HAP-1 (cell line): ENCODE measurements at regions of chr11 and their contacts with region 1.

Region 1: GRCh38 chr11:75706260-75706729 is 11.3 kb upstream of the MOGAT2 start:
- DNase-seq: peak; percentile 72 to 85
- H3K4me3 ChIP-seq: no peak overlapping the region
- H3K4me1 ChIP-seq: no peaks in the 10 kb centered on the region
- H3K27me3 ChIP-seq: no peaks in the 10 kb centered on the region

Region 2: DNA sequence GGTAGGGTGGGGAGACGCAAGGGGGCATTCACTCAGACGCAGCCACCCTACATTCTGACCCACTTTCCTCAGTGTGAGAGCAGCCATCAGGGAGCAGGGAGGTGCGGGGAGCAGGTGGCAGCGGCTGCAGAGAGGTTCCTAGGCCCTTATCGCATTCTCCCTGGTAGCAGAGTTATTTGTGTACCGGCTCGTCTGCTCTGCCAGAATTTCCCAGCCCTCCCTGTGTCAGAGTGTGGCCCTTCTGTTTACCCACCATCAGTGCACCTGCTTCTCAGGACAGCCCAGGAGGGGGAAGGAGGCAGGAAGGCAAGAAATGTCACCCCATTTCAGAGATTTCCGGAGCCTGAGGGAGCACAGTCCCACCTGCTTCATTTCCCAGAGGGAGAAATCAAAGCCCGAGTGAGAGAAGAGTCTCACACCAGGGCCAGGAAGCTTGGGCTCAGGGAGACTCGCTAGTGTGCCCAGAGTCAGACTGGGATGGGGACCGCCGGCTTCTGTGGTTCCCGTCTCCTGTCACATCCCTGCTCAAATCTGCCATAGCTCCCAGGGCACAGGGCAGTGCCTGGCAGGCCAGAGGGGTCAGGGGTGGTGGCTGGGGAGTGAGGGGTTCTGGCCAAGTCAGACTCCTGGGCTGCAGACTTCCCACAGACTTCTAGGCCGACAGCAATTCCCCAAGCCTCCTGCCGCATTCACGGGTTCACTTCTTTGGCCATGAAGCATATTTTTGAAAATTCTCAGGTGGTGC is 404.5 kb before region 1 on chr11:
- in situ Hi-C with region 1: no loop called
- DNase-seq: no peak
- H3K4me3 ChIP-seq: no peak overlapping the region
- H3K4me1 ChIP-seq: no peaks in the 10 kb centered on the region
- H3K27me3 ChIP-seq: no peaks in the 10 kb centered on the region

Region 3: DNA sequence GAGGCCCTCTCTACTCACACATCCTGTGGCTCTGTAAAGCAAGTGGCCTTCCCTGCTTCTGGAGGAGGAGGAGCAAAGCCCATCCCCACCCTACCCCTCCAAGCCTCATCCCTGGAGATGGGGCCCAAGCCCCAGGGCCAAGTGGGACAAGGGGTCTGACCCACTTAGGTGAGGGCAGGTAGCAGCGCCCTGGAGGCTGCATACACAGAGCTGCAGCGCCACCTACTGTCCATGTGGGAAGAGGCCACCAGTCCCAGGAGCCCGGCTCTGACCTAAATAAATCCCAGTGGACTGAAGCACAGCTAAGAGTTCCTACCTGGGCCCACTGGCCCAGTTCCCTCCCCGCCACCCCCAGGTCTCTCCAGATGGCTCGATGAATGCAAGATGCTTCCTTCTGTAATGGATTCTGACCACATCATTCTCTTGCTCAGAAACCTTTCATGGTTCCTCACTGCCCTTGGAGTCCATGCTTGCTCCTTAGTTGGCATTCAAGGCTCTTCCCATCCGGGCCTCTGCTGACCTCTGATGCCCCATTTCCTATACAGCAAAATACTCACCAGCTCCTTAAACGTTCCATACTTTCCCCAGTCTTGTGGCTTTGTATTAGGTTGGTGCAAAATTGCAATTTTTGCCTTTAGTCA is 612.6 kb after region 1 on chr11:
- in situ Hi-C with region 1: loop called (anchors 25 kb)
- DNase-seq: peak; percentile 71 to 91
- H3K4me3 ChIP-seq: no peak overlapping the region
- H3K4me1 ChIP-seq: no peaks in the 10 kb centered on the region
- H3K27me3 ChIP-seq: no peaks in the 10 kb centered on the region